ENCODE measurements at regions of chr13 and their contacts with region 1.

Region 1: DNA sequence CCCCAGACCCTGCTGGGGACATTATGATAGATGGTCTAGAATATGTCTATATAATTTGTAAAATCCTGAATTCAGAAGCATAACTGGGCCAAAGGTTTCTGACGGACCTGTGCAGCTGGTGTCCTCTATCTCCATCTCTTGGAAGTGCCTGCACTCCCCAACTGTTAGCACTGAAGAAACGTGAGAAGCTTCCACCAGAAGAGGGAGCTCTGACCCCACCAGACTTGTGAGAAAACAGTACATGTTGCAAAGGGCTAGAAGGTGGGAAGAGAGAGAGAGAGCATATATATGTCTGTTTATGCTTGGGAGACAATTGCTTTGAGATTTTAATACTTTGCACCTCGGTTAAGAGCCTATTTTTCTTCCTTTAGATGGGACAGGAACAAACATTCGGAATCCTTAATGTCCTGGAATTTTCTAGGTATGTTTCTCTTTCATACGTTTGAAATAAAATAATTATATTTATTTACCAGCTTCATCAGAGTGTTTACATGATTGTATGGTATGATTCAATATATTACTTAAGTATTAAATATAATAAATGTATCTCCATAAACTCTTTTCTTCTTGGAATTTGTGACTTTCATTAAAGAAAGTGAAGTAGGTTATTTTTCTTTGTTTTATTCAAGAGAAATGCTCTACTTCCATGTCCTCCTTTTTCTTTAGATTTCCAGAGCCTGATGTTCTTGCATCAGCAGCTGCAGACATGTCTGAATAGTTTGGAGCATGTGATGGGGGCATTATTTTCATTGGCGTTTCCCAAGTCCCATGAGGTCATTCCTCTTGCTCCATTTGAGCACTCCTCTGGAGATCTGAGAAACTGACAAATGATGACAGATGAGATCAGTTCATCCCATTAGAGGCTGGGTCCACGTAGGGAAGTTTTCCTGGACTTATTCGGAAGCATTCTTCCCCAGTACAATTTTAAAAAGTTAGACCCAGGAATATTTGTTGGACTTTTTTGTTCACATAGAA is 202.9 kb downstream of the ATP8A2 start:
- DNase-seq: peak; percentile 40
- H3K4me3 ChIP-seq: no peak overlapping the region
- CTCF ChIP-seq: peak; percentile 86

Region 2: DNA sequence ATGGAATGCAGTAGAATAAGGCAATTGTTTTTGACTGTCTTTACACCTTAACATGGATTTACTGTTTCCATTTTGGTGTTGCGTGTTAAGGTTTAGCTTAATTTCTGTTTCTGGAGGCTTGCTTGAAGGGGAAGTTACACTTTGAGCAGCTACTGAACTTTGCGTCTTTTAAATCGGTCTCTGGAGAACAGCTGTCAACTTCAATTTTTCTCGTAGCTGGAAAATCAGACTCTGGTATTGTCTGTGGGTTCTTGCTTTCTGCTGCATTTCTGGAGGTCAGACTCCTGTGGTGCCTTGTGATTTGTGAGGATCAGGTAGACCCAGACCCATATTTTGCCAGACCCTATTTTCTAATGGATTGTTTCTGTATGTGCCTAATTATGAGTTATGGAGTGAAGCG is 56.3 kb before region 1 on chr13:
- CTCF ChIA-PET with region 1: no interaction called
- POLR2A ChIA-PET with region 1: no interaction called
- DNase-seq: no peak
- H3K4me3 ChIP-seq: no peak overlapping the region
- CTCF ChIP-seq: no peak

Region 3: GRCh38 chr13:25585000-25585399 is 10.3 kb after region 1 on chr13:
- CTCF ChIA-PET with region 1: interaction called, 15 read pairs
- POLR2A ChIA-PET with region 1: no interaction called
- DNase-seq: no peak
- H3K4me3 ChIP-seq: no peak overlapping the region
- CTCF ChIP-seq: no peak

Region 4: DNA sequence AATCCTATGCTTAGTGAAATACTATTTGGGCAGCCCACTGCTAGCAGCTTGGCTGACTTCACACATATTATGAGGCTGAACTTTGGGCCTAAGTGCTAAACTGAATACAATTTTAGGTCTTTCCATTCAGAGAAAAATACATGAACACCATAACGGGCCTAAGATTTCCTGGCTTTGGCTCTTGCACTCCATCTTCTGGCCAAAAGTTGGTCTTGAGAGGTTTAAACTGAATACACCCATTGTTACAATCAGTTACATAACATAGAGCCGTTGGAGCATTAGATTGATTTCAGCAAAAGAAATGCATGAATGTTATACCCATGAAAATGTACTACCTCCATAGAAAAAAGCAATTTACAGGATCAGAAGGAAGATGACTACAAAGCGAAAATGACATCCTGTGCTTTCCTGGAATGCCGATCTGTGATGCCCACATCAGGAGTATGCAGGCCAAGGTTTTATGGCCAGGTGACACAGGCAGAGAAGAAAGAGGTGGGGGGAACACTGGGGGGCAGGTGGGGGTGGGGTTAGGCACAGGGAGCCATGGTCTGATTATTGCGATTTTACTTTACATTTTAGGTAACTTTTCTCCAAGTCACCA is 488.2 kb after region 1 on chr13:
- CTCF ChIA-PET with region 1: interaction called, 54 read pairs
- POLR2A ChIA-PET with region 1: no interaction called
- DNase-seq: no peak
- H3K4me3 ChIP-seq: no peak overlapping the region
- CTCF ChIP-seq: peak; percentile 68

Region 5: DNA sequence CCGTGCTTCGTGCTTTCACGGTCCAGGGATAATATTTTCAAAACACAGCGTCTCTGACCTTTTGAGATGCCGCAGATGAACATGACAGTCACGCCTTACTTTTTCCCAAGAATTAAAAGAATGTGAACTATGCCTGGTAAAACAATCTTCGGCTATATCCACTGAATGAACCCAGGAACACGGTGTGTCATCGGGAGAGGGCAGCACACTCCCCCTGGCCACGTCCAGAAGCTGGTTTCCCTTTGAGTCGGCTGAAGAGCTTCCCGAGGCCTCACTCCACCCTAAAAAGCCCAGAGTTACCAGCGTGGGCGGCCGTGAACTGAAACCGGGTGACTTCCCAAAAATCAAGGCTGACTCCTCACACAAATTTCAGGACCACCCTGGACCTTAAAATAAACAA is 500.0 kb after region 1 on chr13:
- CTCF ChIA-PET with region 1: interaction called, 33 read pairs
- POLR2A ChIA-PET with region 1: no interaction called
- DNase-seq: no peak
- H3K4me3 ChIP-seq: no peak overlapping the region
- CTCF ChIP-seq: no peak